ENCODE measurements at regions of chr19 and their contacts with region 1.

Region 1: GRCh38 chr19:44071824-44072542 is at the start of gene ZNF284:
- DNase-seq: peak; percentile 87
- H3K4me3 ChIP-seq: peak within 1 kb of the TSS; percentile 62 to 84 (median 75)
- H3K27ac ChIP-seq: peak within 1 kb of the TSS; percentile 2
- H3K4me1 ChIP-seq: peaks cover 9% of the 10 kb centered on the region
- H3K27me3 ChIP-seq: no peaks in the 10 kb centered on the region
- CTCF ChIP-seq: no peak
- total RNA-seq, gene ZNF284: 2.6 to 4.7 TPM

Region 2: GRCh38 chr19:43606569-43607229 is 465.3 kb before region 1 on chr19:
- CTCF ChIA-PET with region 1: no interaction called
- dilution Hi-C with region 1: no loop called
- in situ Hi-C with region 1: no loop called
- intact Hi-C with region 1: no loop called
- DNase-seq: peak; percentile 78
- H3K4me3 ChIP-seq: no peak overlapping the region
- H3K27ac ChIP-seq: peak overlapping the region; percentile 74
- H3K4me1 ChIP-seq: peaks cover 19% of the 10 kb centered on the region
- H3K27me3 ChIP-seq: no peaks in the 10 kb centered on the region
- CTCF ChIP-seq: no peak

Region 3: GRCh38 chr19:43966079-43966694 is 105.8 kb before region 1 on chr19:
- CTCF ChIA-PET with region 1: no interaction called
- dilution Hi-C with region 1: no loop called
- in situ Hi-C with region 1: no loop called
- intact Hi-C with region 1: no loop called
- DNase-seq: no peak
- H3K4me3 ChIP-seq: no peak overlapping the region
- H3K27ac ChIP-seq: no peak overlapping the region
- H3K4me1 ChIP-seq: no peaks in the 10 kb centered on the region
- H3K27me3 ChIP-seq: no peaks in the 10 kb centered on the region
- CTCF ChIP-seq: no peak

Region 4: DNA sequence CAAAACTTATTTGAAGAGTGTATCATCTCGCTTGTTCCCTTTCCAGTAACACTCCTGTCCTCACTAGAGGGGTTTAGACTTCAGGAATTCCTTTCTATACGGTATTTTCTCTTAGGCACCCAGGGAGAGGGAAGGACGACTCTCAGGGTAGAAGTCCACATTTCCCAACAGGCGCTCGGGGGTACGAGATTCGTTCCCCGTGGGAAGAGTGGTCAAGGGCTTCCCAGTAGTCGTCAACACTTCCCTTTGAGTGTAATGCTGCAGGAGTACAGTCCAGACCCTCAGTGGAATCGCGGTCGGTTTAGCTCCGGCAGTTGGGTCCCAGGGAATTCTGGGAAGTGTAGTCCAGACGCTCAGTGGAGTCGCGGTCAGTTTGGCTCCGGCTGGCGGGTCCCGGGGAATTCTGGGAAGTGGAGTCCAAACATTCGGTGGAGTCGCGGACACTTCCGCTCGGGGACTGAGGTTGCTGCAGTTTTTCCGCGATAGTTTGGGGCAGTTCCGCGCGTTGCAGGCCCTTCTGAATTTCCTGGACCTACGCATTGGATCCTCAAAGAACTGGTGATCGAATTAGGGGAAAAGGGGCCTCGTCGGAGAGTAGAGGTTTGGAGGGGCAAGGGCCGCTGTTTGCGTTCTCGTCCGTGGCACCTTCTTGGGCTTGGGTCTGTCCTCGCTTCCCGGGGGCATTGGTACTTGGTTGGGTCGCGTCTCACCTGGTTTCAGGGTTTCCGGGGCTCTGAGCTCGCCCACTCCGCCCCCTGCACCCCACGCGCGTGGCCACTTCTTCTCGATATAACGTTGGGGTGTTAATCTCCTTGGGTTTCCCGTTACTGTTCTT is 22.2 kb after region 1 on chr19 and contains the start of gene ZNF224:
- CTCF ChIA-PET with region 1: no interaction called
- dilution Hi-C with region 1: no loop called
- in situ Hi-C with region 1: no loop called
- intact Hi-C with region 1: loop called (anchors 1 kb)
- DNase-seq: peak; percentile 89
- H3K4me3 ChIP-seq: peak within 1 kb of the TSS; percentile 82 to 93 (median 89)
- H3K27ac ChIP-seq: peak within 1 kb of the TSS; percentile 49
- H3K4me1 ChIP-seq: no peaks in the 10 kb centered on the region
- H3K27me3 ChIP-seq: no peaks in the 10 kb centered on the region
- CTCF ChIP-seq: no peak
- total RNA-seq, gene ZNF224: 15.3 to 24.0 TPM

Region 5: GRCh38 chr19:44315883-44316282 is 243.9 kb after region 1 on chr19:
- CTCF ChIA-PET with region 1: no interaction called
- dilution Hi-C with region 1: no loop called
- in situ Hi-C with region 1: no loop called
- intact Hi-C with region 1: no loop called
- DNase-seq: no peak
- H3K4me3 ChIP-seq: no peak overlapping the region
- H3K27ac ChIP-seq: no peak overlapping the region
- H3K4me1 ChIP-seq: no peaks in the 10 kb centered on the region
- H3K27me3 ChIP-seq: no peaks in the 10 kb centered on the region
- CTCF ChIP-seq: no peak